Naive thymus-derived CD4-positive, alpha-beta T cell (primary cell): ENCODE measurements at regions of chr12 and their contacts with region 1.

Region 1: DNA sequence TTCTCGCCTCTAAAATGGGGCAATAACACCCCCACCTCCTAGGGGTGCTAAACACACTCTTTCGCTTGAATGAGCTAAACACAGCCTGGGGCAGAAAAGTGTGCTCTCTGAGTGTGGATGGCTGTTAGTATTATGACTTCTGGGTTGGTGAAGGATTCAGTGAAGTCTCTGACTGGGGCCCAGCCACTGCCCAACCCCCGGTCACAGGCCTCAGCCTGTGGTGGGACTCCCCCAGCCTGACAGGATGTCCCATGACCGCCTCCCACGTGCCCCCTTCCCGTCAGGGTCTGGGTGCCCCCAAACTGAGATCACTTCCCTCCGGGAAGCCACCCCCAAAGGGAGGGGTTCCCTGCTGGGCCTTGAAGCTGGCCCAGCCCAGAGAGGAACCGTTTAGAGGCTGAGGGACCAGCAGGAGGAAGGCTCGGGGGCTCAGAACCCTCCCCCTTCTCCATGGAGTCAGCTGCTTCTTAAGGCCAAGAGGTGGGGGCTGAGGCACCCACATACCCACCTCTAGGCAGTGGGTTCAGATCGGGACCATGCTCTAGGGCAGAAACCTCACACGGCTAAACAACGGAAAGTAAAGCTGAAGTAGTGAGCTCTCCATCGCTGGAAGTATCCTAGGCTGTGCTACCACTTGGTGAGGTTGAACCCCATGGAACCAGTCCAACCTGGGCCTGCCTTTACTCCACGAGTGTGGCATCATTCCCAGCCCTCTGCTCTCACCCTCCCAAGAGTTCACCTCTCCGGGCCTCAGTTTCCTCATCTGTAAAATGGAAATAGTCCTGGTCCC is 13.8 kb downstream of the DTX1 start:
- DNase-seq: peak in 1 of 9 donors; percentile 33
- ATAC-seq: peak; percentile 66
- H3K4me3 ChIP-seq: no peak overlapping the region
- H3K4me3 Mint-ChIP-seq: peak overlapping the region in 5 of 10 donors; percentile 8 to 48 (median 16)
- H3K27ac ChIP-seq: peak overlapping the region; percentile 41
- H3K27ac Mint-ChIP-seq: peak overlapping the region in 7 of 9 donors; percentile 46 to 79 (median 62)
- H3K4me1 ChIP-seq: peaks cover 14 to 45% of the 10 kb centered on the region in 2 donors
- H3K4me1 Mint-ChIP-seq: peaks cover 13 to 93% (median 75%) of the 10 kb centered on the region in 7 donors
- H3K27me3 ChIP-seq: no peaks in the 10 kb centered on the region
- H3K27me3 Mint-ChIP-seq: no peaks in the 10 kb centered on the region

Region 2: DNA sequence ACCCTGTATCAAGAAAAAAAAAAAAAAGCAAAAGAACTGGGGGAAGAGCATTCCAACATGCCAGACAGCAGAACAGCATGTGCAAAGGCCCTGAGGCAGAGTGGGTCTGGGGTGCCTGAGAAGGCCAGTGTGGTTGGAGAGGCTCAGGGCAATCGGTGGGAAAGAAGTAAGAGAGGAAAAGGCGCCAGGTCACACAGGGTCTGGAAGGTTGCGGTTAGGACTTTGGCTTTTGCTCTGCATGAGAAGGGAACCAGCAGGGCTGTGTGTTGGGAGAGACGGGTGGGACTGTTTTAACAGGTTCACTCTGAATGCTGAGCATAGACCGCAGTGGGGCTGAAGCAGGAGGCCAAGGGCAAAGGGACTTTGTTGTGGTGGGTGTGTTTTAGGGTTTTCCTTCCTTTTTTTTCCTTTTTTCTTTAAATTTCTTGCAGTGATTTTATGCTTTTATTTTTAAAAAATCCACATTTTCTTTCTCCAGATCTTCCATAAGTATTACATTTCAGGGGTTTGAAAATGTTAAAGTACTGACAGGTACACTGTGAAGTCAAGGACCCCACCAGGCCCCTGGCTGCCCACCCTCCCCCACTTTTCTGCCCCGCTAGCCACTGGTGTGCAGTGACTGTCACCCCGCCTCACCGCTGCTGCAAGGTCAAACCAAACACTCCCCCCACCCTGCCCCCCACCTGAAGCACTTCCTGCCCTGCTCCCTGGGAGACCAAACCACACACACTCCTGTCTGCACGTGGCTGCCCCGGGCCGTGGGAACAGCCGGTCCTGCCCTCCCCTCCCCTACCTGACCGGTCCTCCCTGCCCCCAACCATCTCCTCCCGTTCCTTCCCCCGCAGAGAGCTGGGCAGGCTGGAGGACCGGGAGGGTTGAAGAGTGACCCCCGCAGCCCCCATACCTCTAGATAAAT is 16.2 kb after region 1 on chr12:
- CTCF ChIA-PET with region 1: interaction called, 3 read pairs
- POLR2A ChIA-PET with region 1: interaction called, 4 read pairs
- intact Hi-C with region 1: loop called in 1 of 2 experiments (anchors 1 kb)
- DNase-seq: peak in 2 of 9 donors; percentile 30 to 32
- ATAC-seq: peak; percentile 45
- H3K4me3 ChIP-seq: peak overlapping the region; percentile 11
- H3K4me3 Mint-ChIP-seq: peak overlapping the region; percentile 50 to 89 (median 77)
- H3K27ac ChIP-seq: peak overlapping the region; percentile 56
- H3K27ac Mint-ChIP-seq: peak overlapping the region in 8 of 9 donors; percentile 44 to 93 (median 90)
- H3K4me1 ChIP-seq: peaks cover 52 to 65% of the 10 kb centered on the region in 2 donors
- H3K4me1 Mint-ChIP-seq: peaks cover 31 to 96% (median 90%) of the 10 kb centered on the region in 7 donors
- H3K27me3 ChIP-seq: no peaks in the 10 kb centered on the region
- H3K27me3 Mint-ChIP-seq: no peaks in the 10 kb centered on the region